OCI-LY7 (cell line): ENCODE measurements at regions of chr11 and their contacts with region 1.

Region 1: DNA sequence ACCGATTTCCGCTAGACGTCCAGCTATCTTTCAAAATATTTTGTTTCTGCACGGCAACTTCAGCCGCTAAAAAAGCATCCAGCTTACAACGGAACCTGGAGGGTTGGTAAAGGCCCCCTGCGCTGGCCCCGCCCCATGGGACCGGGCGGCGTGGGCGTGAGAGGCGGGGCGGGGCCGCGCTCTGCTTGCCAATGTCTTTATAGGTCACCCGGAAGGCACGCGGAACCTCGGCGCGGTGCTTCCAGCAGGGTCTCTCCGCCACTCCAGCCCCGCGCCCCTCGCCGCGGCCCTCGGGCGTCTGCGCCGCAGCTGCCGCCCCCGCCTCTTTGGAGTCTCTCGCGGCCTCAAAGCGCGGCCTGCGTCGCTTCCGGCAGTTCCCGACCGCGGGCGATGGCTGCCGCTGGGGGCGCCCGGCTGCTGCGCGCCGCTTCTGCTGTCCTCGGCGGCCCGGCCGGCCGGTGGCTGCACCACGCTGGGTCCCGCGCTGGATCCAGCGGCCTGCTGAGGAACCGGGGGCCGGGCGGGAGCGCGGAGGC is at the start of gene FDX1:
- DNase-seq: peak; percentile 94
- H3K4me3 ChIP-seq: peak within 1 kb of the TSS; percentile 89
- H3K27ac ChIP-seq: peak within 1 kb of the TSS; percentile 81
- H3K4me1 ChIP-seq: peaks cover 33% of the 10 kb centered on the region
- CTCF ChIP-seq: peak; percentile 64
- total RNA-seq, gene FDX1: 13.3 and 14.3 TPM in 2 replicates

Region 2: DNA sequence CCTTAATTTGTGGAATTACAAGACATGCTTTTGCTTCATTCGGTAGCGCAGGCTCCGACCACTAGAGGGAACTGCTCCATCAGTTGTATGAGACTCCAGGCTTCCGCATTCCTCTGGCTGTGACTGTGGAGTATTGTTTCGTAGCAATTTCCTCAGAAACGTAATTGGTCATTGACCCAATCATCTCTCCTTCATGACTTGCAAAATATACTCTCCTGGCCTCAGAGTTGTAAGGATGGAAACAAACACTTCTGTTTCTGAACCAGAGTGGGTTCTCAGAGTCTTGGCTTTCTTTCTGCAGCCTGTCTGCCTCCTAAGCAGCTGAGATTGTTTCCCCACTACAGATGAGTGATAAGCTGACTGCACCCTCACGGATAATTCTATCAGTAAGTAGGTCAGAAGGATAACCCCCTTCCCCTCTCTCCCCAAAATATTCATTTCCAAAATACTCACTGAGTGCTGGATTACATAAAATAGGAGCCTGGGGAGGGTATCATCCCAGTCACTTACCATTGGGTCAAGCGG is 483.4 kb before region 1 on chr11:
- CTCF ChIA-PET with region 1: no interaction called
- POLR2A ChIA-PET with region 1: interaction called, 3 read pairs
- intact Hi-C with region 1: loop called (anchors 2 kb)
- DNase-seq: peak; percentile 87
- H3K4me3 ChIP-seq: peak overlapping the region; percentile 48
- H3K27ac ChIP-seq: no peak overlapping the region
- H3K4me1 ChIP-seq: peaks cover 9% of the 10 kb centered on the region
- CTCF ChIP-seq: peak; percentile 99

Region 3: GRCh38 chr11:110200241-110200640 is 229.6 kb before region 1 on chr11:
- CTCF ChIA-PET with region 1: no interaction called
- POLR2A ChIA-PET with region 1: interaction called, 3 read pairs
- intact Hi-C with region 1: loop called (anchors 2 kb)
- DNase-seq: no peak
- H3K4me3 ChIP-seq: no peak overlapping the region
- H3K27ac ChIP-seq: no peak overlapping the region
- H3K4me1 ChIP-seq: no peaks in the 10 kb centered on the region
- CTCF ChIP-seq: no peak

Region 4: GRCh38 chr11:110296226-110297075 is 133.3 kb before region 1 on chr11 and contains the start of gene RDX:
- CTCF ChIA-PET with region 1: no interaction called
- POLR2A ChIA-PET with region 1: interaction called, 4 read pairs
- intact Hi-C with region 1: loop called (anchors 5 kb)
- DNase-seq: peak; percentile 80
- H3K4me3 ChIP-seq: peak within 1 kb of the TSS; percentile 92
- H3K27ac ChIP-seq: peak within 1 kb of the TSS; percentile 33
- H3K4me1 ChIP-seq: peaks cover 9% of the 10 kb centered on the region
- CTCF ChIP-seq: 0 out of 2 replicates have a peak, but pooled peaks have one; percentile 13
- total RNA-seq, gene RDX: 23.2 and 23.7 TPM in 2 replicates

Region 5: GRCh38 chr11:110327508-110327907 is 102.3 kb before region 1 on chr11:
- CTCF ChIA-PET with region 1: interaction called, 8 read pairs
- POLR2A ChIA-PET with region 1: interaction called, 3 read pairs
- intact Hi-C with region 1: loop called (anchors 5 kb)
- DNase-seq: peak; percentile 20
- H3K4me3 ChIP-seq: peak overlapping the region; percentile 74
- H3K27ac ChIP-seq: peak overlapping the region; percentile 85
- H3K4me1 ChIP-seq: peaks cover 27% of the 10 kb centered on the region
- CTCF ChIP-seq: no peak

Region 6: DNA sequence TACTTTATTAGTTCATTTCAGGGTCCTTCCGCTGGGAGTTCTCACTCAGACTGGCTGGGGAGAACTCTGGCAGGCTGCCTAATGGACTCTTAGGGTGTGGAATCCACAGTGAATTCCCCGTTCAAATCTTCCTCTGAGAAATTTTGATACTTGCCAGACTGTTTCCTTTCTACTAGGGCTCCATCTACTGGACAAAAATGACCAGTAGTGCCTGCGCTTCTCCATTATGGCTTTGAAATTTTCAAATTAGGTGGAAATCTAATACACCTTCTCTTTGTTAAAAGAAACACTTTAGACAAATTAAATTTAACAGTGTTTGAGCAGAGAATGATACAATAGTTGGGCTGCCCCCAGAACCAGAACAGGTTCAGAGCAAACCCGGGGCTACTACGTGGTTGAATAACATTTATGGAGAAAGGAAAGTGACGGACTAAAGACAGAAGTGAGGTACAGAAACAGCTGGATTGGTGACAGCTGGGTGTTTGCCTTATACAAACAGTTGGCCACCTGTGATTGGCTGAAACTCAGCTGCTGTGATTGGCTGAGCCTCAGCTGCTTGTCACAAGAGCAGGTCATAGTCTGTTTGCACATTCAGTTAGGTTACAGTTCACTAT is 53.0 kb before region 1 on chr11:
- CTCF ChIA-PET with region 1: interaction called, 4 read pairs
- POLR2A ChIA-PET with region 1: interaction called, 4 read pairs
- intact Hi-C with region 1: loop called (anchors 2 kb)
- DNase-seq: peak; percentile 68
- H3K4me3 ChIP-seq: peak overlapping the region; percentile 31
- H3K27ac ChIP-seq: no peak overlapping the region
- H3K4me1 ChIP-seq: peaks cover 7% of the 10 kb centered on the region
- CTCF ChIP-seq: peak; percentile 96

Region 7: DNA sequence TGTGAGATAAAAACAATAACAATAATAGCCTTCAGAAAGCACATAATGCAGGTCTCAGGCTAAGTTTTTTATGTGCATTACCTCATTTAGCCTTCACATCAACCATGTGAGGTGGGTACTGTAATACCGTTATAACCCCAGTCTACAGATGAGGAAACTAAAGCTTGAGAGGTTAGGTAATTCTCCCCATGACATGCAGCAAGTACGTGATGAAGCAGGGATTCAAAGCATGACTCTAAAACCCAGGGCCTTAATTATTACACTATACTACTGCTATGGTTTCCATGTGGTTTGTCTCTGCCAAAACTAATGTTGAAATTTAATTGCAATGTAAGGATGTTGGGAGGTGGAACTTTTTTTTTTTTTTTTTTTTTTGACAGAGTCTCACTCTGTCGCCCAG is 37.7 kb before region 1 on chr11:
- CTCF ChIA-PET with region 1: no interaction called
- POLR2A ChIA-PET with region 1: no interaction called
- intact Hi-C with region 1: no loop called
- DNase-seq: no peak
- H3K4me3 ChIP-seq: no peak overlapping the region
- H3K27ac ChIP-seq: no peak overlapping the region
- H3K4me1 ChIP-seq: no peaks in the 10 kb centered on the region
- CTCF ChIP-seq: no peak

Region 8: DNA sequence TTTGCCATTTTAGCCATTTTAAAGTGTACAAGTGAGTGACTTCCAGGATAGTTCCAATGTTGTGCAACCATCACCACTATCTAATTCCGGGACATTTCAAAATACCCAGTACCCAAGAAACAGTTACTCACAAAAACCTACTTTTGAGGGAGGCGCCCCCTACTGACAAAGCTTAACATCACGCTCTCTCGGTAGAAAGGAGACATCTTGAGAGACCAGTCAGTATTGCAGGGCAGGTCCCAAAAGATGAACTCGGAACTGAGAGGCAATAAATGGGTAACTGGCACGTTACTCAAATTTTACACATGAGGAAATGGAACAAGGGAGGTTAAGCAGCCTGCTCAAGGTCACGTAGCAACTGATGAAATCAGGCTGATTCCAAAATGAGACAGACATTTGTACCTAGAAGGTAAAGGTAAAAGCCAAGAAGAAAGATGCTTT is 999.3 kb after region 1 on chr11:
- CTCF ChIA-PET with region 1: no interaction called
- POLR2A ChIA-PET with region 1: no interaction called
- intact Hi-C with region 1: loop called (anchors 5 kb)
- DNase-seq: peak; percentile 85
- H3K4me3 ChIP-seq: no peak overlapping the region
- H3K27ac ChIP-seq: no peak overlapping the region
- H3K4me1 ChIP-seq: peaks cover 26% of the 10 kb centered on the region
- CTCF ChIP-seq: peak; percentile 100